BJ (cell line): ENCODE measurements at regions of chr6 and their contacts with region 1.

Region 1: GRCh38 chr6:22362350-22362749 is 65.5 kb upstream of the PRL start:
- DNase-seq: no peak
- H3K4me3 ChIP-seq: no peak overlapping the region
- H3K27me3 ChIP-seq: no peaks in the 10 kb centered on the region
- CTCF ChIP-seq: no peak

Region 2: DNA sequence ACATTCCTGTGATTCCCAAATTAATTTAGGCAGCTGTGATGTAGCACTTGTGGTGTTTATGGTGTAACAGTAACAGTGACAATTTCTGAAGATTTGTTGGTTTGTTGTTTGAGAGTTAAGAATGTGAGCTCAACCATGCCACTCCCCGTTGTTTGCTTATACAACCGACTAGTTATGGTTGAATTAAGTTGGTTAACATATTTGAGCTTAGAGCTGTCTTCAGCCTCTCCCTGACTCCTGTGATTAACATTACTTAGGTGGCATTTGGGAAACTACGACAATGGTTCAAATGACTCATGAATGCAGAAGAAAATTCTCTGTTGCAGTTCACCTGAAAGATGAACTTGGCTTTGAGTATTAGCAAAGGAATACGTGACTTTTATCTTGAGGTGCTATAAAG is 29.6 kb before region 1 on chr6:
- CTCF ChIA-PET with region 1: no interaction called
- POLR2A ChIA-PET with region 1: interaction called, 14 read pairs
- DNase-seq: no peak
- H3K4me3 ChIP-seq: no peak overlapping the region
- H3K27me3 ChIP-seq: no peaks in the 10 kb centered on the region
- CTCF ChIP-seq: no peak

Region 3: GRCh38 chr6:22801826-22802225 is 439.5 kb after region 1 on chr6:
- CTCF ChIA-PET with region 1: no interaction called
- POLR2A ChIA-PET with region 1: no interaction called
- DNase-seq: no peak
- H3K4me3 ChIP-seq: no peak overlapping the region
- H3K27me3 ChIP-seq: no peaks in the 10 kb centered on the region
- CTCF ChIP-seq: no peak